ENCODE measurements at regions of chr3 and their contacts with region 1.

Region 1: DNA sequence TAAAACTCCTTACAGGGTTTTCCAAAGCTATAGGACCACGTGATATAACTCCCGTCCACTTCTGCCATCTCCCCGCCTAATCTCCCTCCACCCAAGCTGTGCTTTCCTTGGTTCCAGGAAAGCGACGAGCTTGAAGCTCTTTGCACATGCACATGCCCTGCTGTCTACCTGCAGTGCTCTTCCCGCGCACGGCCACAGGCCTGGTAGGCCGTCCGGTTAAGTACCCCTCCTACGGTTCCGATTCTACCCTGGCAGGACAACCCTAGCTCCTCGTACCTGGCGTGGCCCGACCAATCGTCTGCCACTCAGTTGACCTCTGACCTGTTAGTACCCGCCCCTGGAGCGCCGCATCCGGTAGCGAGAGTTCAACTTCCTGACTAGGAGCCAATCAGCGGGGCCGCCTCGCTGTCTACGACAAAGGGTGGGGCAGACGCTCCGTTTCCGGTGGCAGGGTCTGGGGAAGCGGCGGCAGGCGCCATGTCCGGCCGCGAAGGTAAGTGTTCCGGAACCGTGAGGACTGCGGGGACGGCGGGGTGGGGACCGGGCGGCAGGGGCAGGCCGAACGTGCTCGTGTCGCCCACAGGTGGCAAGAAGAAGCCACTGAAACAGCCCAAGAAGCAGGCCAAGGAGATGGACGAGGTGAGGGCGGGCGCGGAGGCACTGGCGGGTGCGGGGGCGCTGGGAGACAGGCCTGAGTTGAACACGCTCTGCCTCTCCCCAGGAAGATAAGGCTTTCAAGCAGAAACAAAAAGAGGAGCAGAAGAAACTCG is at the starts of genes CCDC51 and TMA7:
- DNase-seq: peak; percentile 99
- H3K4me3 Mint-ChIP-seq: peak within 1 kb of the TSS; percentile 90
- H3K27ac Mint-ChIP-seq: peak within 1 kb of the TSS; percentile 87
- H3K4me1 Mint-ChIP-seq: peaks cover 32% of the 10 kb centered on the region
- H3K27me3 Mint-ChIP-seq: no peaks in the 10 kb centered on the region
- total RNA-seq, gene CCDC51: 24.3 to 24.4 TPM
- total RNA-seq, gene TMA7: 318 to 323 TPM

Region 2: GRCh38 chr3:48232734-48233133 is 207.3 kb before region 1 on chr3:
- CTCF ChIA-PET with region 1: interaction called, 43 read pairs
- POLR2A ChIA-PET with region 1: no interaction called
- intact Hi-C with region 1: loop called (anchors 2 kb)
- DNase-seq: peak; percentile 77
- H3K4me3 Mint-ChIP-seq: no peak overlapping the region
- H3K27ac Mint-ChIP-seq: no peak overlapping the region
- H3K4me1 Mint-ChIP-seq: peaks cover 2% of the 10 kb centered on the region
- H3K27me3 Mint-ChIP-seq: peaks cover 3% of the 10 kb centered on the region

Region 3: GRCh38 chr3:48273594-48274211 is 166.3 kb before region 1 on chr3:
- CTCF ChIA-PET with region 1: interaction called, 156 read pairs
- POLR2A ChIA-PET with region 1: interaction called, 6 read pairs
- intact Hi-C with region 1: loop called (anchors 1 kb)
- DNase-seq: peak; percentile 65
- H3K4me3 Mint-ChIP-seq: no peak overlapping the region
- H3K27ac Mint-ChIP-seq: no peak overlapping the region
- H3K4me1 Mint-ChIP-seq: peaks cover 18% of the 10 kb centered on the region
- H3K27me3 Mint-ChIP-seq: no peaks in the 10 kb centered on the region

Region 4: GRCh38 chr3:48415554-48415953 is 24.5 kb before region 1 on chr3:
- CTCF ChIA-PET with region 1: interaction called, 60 read pairs
- POLR2A ChIA-PET with region 1: no interaction called
- intact Hi-C with region 1: no loop called
- DNase-seq: no peak
- H3K4me3 Mint-ChIP-seq: no peak overlapping the region
- H3K27ac Mint-ChIP-seq: no peak overlapping the region
- H3K4me1 Mint-ChIP-seq: no peaks in the 10 kb centered on the region
- H3K27me3 Mint-ChIP-seq: no peaks in the 10 kb centered on the region

Region 5: GRCh38 chr3:48472915-48473616 is 33.1 kb after region 1 on chr3:
- CTCF ChIA-PET with region 1: interaction called, 40 read pairs
- POLR2A ChIA-PET with region 1: interaction called, 15 read pairs
- intact Hi-C with region 1: loop called (anchors 1 kb)
- DNase-seq: peak; percentile 98
- H3K4me3 Mint-ChIP-seq: peak overlapping the region; percentile 79
- H3K27ac Mint-ChIP-seq: peak overlapping the region; percentile 98
- H3K4me1 Mint-ChIP-seq: peaks cover 50% of the 10 kb centered on the region
- H3K27me3 Mint-ChIP-seq: no peaks in the 10 kb centered on the region

Region 6: DNA sequence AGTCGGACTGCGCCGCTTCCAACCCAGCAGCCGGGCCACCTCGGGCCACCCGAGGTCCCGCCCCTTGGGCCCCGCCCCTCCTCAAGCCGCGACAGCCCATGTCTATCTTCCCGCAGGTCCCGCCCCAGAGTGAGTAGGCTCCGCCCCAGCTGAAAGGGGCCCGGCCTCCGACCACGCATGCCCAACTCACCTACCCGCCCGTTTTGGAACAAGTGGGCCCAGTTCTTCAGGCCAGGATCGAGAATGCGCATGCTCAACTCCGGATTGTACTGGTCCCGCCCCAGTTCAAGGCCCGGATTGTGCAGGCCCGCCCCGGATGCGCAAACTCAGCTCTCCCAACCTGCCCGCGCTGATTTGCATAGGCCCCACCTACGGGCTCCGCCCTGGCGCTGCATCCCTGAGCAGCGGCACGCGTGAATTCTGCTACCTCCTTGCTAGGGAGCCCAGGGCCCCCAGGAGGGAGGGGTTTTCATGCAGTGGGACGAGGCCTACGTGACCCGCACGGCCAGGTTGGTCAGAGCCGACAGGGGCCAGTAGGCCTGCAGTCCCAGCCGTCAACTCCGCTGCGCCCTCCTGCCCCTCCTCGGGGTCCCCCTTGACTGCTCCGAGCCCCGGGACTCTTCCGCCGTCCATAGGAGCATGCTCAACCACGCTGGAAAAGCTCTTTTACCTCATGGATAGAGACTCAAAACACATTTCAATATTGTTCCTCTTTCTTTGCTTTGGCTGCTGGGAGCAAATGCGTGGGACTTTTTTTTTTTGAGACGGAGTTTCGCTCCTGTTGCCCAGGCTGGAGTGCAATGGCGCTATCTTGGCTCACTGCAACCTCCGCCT is 117.0 kb after region 1 on chr3 and contains the start of gene PFKFB4:
- CTCF ChIA-PET with region 1: interaction called, 38 read pairs
- POLR2A ChIA-PET with region 1: interaction called, 5 read pairs
- intact Hi-C with region 1: loop called (anchors 1 kb)
- DNase-seq: peak; percentile 100
- H3K4me3 Mint-ChIP-seq: peak within 1 kb of the TSS; percentile 83
- H3K27ac Mint-ChIP-seq: peak within 1 kb of the TSS; percentile 59
- H3K4me1 Mint-ChIP-seq: peaks cover 16% of the 10 kb centered on the region
- H3K27me3 Mint-ChIP-seq: no peaks in the 10 kb centered on the region
- total RNA-seq, gene PFKFB4: 19.4 to 22.4 TPM